T-cell (primary cell): ENCODE measurements at regions of chr2 and their contacts with region 1.

Region 1: DNA sequence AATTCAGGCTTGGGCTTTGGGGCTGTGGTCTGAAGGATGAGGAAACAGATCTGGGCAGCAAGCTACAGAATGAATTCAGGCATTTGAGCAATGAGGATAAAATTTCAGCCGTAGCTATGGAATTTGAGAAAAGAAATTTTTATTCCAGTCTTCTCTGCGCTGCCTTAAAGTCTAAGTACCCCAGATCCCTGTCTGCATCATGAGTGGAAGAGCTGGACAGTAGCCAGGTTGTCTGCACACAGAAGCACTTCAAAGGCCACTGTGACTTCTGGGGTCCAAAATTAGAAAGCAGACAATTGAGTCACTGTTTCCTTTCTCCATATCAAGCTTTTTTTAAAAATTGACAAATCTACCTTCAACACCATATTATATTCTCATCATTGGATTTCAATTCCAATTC is 787.6 kb upstream of the GCFC2 start:
- DNase-seq: no peak
- ATAC-seq: no peak
- H3K4me3 ChIP-seq: no peak overlapping the region
- H3K4me3 Mint-ChIP-seq: no peak overlapping the region
- H3K27ac ChIP-seq: no peak overlapping the region
- H3K27ac Mint-ChIP-seq: no peak overlapping the region
- H3K4me1 ChIP-seq: no peaks in the 10 kb centered on the region
- H3K4me1 Mint-ChIP-seq: no peaks in the 10 kb centered on the region
- H3K27me3 ChIP-seq: no peaks in the 10 kb centered on the region
- H3K27me3 Mint-ChIP-seq: no peaks in the 10 kb centered on the region

Region 2: GRCh38 chr2:76544901-76545300 is 46.5 kb after region 1 on chr2:
- CTCF ChIA-PET with region 1: no interaction called
- POLR2A ChIA-PET with region 1: no interaction called
- DNase-seq: no peak
- ATAC-seq: no peak
- H3K4me3 ChIP-seq: no peak overlapping the region
- H3K4me3 Mint-ChIP-seq: no peak overlapping the region
- H3K27ac ChIP-seq: no peak overlapping the region
- H3K27ac Mint-ChIP-seq: no peak overlapping the region
- H3K4me1 ChIP-seq: no peaks in the 10 kb centered on the region
- H3K4me1 Mint-ChIP-seq: no peaks in the 10 kb centered on the region
- H3K27me3 ChIP-seq: no peaks in the 10 kb centered on the region
- H3K27me3 Mint-ChIP-seq: no peaks in the 10 kb centered on the region

Region 3: DNA sequence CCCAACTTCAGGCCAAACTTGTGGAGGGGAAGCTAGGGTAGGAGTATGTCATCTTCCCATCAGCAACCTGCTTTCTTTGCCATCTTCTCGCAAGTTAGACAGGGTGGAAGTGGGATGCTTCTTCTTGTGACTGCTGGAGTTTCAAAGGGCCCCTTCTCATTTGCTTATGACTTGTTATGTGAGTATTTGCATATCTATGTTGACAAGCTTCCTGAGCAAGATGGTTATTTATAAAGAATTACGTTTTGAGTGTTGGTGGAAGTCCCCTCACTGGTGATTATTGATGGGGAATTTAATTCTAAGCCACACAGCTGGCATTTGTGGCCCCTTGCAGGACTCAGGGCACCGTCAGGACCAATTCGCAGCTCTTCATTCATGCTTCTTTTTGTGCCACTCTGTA is 232.8 kb after region 1 on chr2:
- CTCF ChIA-PET with region 1: no interaction called
- POLR2A ChIA-PET with region 1: interaction called in 1 of 2 experiments, 13 read pairs
- DNase-seq: no peak
- ATAC-seq: no peak
- H3K4me3 ChIP-seq: no peak overlapping the region
- H3K4me3 Mint-ChIP-seq: no peak overlapping the region
- H3K27ac ChIP-seq: no peak overlapping the region
- H3K27ac Mint-ChIP-seq: no peak overlapping the region
- H3K4me1 ChIP-seq: no peaks in the 10 kb centered on the region
- H3K4me1 Mint-ChIP-seq: no peaks in the 10 kb centered on the region
- H3K27me3 ChIP-seq: no peaks in the 10 kb centered on the region
- H3K27me3 Mint-ChIP-seq: no peaks in the 10 kb centered on the region